ENCODE measurements at regions of chr22 and their contacts with region 1.

Region 1: DNA sequence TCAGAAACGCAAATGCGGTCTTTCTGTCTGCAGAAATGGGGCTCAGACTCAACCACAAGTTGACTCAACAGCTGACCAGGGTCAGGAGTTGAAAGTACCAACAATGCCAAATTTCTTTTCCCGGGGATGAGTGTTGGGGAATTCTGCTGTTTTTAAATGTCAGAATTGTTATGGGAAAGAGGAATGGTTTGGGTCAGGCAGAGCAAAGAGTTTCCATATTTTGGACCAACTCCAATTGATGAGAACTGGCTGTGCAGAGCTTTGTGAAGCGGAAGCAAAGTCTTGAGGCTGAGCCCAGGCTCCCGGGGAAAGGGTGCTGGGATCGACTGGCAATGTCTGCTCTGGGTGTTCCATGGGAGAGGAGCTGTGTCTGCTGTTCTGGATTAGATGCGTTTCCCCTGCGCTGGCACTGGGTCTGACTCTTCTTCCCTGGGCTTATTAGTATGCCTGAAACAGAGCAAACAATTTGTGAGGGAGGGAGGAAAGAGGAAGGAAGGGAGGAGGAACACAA is 36.2 kb downstream of the TXN2 start:
- DNase-seq: peak; percentile 51 to 69
- ATAC-seq: peak in 2 of 4 donors; percentile 29 to 39
- H3K4me3 ChIP-seq: no peak overlapping the region
- H3K27ac ChIP-seq: no peak overlapping the region
- H3K4me1 ChIP-seq: peaks cover 12% of the 10 kb centered on the region
- H3K27me3 ChIP-seq: no peaks in the 10 kb centered on the region
- CTCF ChIP-seq: no peak

Region 2: DNA sequence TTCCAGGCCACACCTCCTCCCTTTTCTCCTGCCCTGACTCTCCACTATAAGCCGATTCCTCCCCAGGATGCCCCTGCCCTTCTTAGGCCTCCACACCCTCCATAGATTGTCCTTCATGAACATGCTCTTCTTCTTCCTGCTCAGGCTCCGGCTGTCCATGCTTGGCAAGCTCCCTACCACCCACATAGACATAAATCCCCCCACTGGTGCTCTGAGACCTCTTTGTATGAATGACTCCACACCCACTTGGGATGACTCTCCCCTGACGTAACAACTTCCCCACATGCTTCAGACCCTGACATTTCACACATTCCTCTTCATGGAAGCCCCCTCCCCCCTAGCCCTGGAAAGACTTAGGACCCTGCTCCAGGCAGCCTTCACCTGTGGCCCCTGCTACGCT is 1982.4 kb before region 1 on chr22:
- intact Hi-C with region 1: no loop called
- DNase-seq: no peak
- ATAC-seq: no peak
- H3K4me3 ChIP-seq: no peak overlapping the region
- H3K27ac ChIP-seq: no peak overlapping the region
- H3K4me1 ChIP-seq: no peaks in the 10 kb centered on the region
- H3K27me3 ChIP-seq: peaks cover 0 to 3% (median 0%) of the 10 kb centered on the region in 3 donors
- CTCF ChIP-seq: no peak

Region 3: DNA sequence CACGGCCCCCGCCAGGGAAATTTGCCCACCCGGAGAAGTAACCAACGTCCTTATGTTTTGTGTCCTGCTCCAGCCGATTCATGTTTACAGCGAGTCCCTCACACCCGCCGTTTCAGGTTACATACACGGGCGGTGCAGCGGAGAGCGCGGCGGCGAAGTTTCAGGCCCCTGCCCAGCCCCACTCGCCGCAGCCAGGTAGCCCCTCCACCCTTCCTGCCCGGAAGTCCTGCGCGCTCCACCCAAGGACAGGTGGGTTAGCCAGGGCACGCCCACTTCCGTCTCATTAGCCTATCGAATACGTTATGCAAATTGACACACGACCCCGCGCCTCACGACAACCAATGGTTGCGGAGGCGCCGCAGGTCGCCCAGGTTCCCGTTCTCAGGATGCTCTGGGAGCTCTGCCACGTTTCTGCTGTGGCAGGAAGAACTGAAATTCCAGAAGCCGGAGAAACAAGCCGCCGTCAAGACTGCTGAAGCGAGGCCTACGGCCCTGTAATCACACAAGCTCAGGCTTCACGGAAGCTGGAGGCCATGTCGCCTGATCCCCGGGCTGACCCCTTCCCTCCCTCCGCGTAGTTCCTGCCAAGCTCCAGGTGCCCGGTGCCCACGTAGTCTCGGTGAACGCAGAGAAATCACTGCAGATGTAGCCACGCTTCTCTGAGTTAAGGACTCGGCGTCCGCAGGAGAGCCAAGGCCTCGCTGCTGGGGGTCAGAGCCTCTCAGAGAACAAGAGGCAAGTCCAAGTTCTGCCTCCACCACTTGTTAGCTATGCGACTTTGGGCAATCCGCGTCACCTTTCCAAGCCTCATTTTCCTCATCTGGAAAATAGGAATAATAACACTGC is 35.1 kb before region 1 on chr22:
- intact Hi-C with region 1: loop called (anchors 5 kb)
- DNase-seq: peak; percentile 65 to 74
- ATAC-seq: peak; percentile 86 to 89 (median 87)
- H3K4me3 ChIP-seq: peak overlapping the region; percentile 63
- H3K27ac ChIP-seq: peak overlapping the region; percentile 80
- H3K4me1 ChIP-seq: peaks cover 12% of the 10 kb centered on the region
- H3K27me3 ChIP-seq: no peaks in the 10 kb centered on the region
- CTCF ChIP-seq: no peak